ENCODE measurements at regions of chr13 and their contacts with region 1.

Region 1: GRCh38 chr13:83601539-83601938 is 280.7 kb downstream of the SLITRK1 start:
- DNase-seq: no peak
- H3K4me3 ChIP-seq: no peak overlapping the region
- H3K27ac ChIP-seq: no peak overlapping the region
- H3K4me1 ChIP-seq: no peaks in the 10 kb centered on the region
- H3K27me3 ChIP-seq: no peaks in the 10 kb centered on the region
- CTCF ChIP-seq: no peak
- POLR2A ChIP-seq: no peak

Region 2: GRCh38 chr13:83666141-83666540 is 64.6 kb after region 1 on chr13:
- intact Hi-C with region 1: no loop called
- DNase-seq: no peak
- H3K4me3 ChIP-seq: no peak overlapping the region
- H3K27ac ChIP-seq: no peak overlapping the region
- H3K4me1 ChIP-seq: no peaks in the 10 kb centered on the region
- H3K27me3 ChIP-seq: no peaks in the 10 kb centered on the region
- CTCF ChIP-seq: no peak
- POLR2A ChIP-seq: no peak

Region 3: DNA sequence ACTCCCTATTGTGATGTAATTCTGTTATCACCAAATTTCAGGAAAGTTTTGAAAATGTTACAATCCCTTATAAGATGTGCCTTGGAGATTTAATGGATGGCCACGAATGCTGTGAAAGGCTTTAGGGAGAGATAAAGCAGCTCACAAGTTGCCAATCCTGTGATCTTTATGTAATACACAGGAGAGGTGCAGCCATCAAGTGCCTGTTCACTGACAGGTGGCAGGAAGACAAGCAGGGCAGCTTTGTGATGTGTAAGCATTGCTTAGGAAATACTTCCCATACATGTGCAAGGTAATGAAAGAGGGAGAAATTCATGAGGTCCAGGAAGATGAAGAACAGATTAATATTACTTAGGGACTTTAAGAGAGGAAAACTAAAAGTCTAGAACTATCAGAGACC is 1568.8 kb after region 1 on chr13:
- intact Hi-C with region 1: loop called (anchors 5 kb)
- DNase-seq: no peak
- H3K4me3 ChIP-seq: no peak overlapping the region
- H3K27ac ChIP-seq: no peak overlapping the region
- H3K4me1 ChIP-seq: no peaks in the 10 kb centered on the region
- H3K27me3 ChIP-seq: no peaks in the 10 kb centered on the region
- CTCF ChIP-seq: no peak
- POLR2A ChIP-seq: no peak